Activated T-helper 2 cell treated with anti-CD3 and anti-CD28 coated beads, Interferon-gamma antibody, Interleukin-2, Interleukin-4, amounts not matched to agents 10 μg/mL and 5 μg/mL and 100 μg/mL, durations not matched to agents 14 hours and 24 hours and 36 hours (primary cell): ENCODE measurements at regions of chr10 and their contacts with region 1.

Region 1: GRCh38 chr10:97914837-97915211 is 65.2 kb downstream of the GOLGA7B start:
- DNase-seq: peak; percentile 59
- H3K4me3 Mint-ChIP-seq: no peak overlapping the region
- H3K27ac Mint-ChIP-seq: no peak overlapping the region
- H3K4me1 Mint-ChIP-seq: no peaks in the 10 kb centered on the region
- H3K27me3 Mint-ChIP-seq: peaks cover 8% of the 10 kb centered on the region

Region 2: GRCh38 chr10:98028168-98028770 is 113.4 kb after region 1 on chr10:
- intact Hi-C with region 1: loop called (anchors 5 kb)
- DNase-seq: peak; percentile 42
- H3K4me3 Mint-ChIP-seq: no peak overlapping the region
- H3K27ac Mint-ChIP-seq: no peak overlapping the region
- H3K4me1 Mint-ChIP-seq: no peaks in the 10 kb centered on the region
- H3K27me3 Mint-ChIP-seq: peaks cover 51% of the 10 kb centered on the region

Region 3: GRCh38 chr10:98041372-98042043 is 126.7 kb after region 1 on chr10:
- intact Hi-C with region 1: loop called (anchors 1 kb)
- DNase-seq: peak; percentile 18
- H3K4me3 Mint-ChIP-seq: no peak overlapping the region
- H3K27ac Mint-ChIP-seq: no peak overlapping the region
- H3K4me1 Mint-ChIP-seq: no peaks in the 10 kb centered on the region
- H3K27me3 Mint-ChIP-seq: peaks cover 51% of the 10 kb centered on the region